Esophagus muscularis mucosa (tissue), 4 donors: ENCODE measurements at regions of chr9 and their contacts with region 1.

Region 1: GRCh38 chr9:91301161-91301560 is 60.6 kb downstream of the AUH start:
- DNase-seq: no peak
- H3K4me3 ChIP-seq: no peak overlapping the region
- H3K27ac ChIP-seq: peak overlapping the region; percentile 55 to 85 (median 83)
- H3K4me1 ChIP-seq: peaks cover 27 to 69% (median 54%) of the 10 kb centered on the region in 4 donors
- H3K27me3 ChIP-seq: no peaks in the 10 kb centered on the region
- CTCF ChIP-seq: no peak
- EP300 ChIP-seq: no peak
- POLR2A ChIP-seq: no peak

Region 2: GRCh38 chr9:91193658-91194391 is 107.3 kb before region 1 on chr9:
- intact Hi-C with region 1: loop called (anchors 5 kb)
- DNase-seq: peak; percentile 95
- H3K4me3 ChIP-seq: peak overlapping the region; percentile 55 to 58 (median 57)
- H3K27ac ChIP-seq: peak overlapping the region; percentile 98 to 100 (median 99)
- H3K4me1 ChIP-seq: peaks cover 53 to 73% (median 72%) of the 10 kb centered on the region in 4 donors
- H3K27me3 ChIP-seq: no peaks in the 10 kb centered on the region
- CTCF ChIP-seq: no peak
- EP300 ChIP-seq: peak; percentile 33
- POLR2A ChIP-seq: peak; percentile 72

Region 3: GRCh38 chr9:91207729-91208418 is 93.3 kb before region 1 on chr9:
- intact Hi-C with region 1: loop called (anchors 5 kb)
- DNase-seq: no peak
- H3K4me3 ChIP-seq: peak overlapping the region in 2 of 4 donors; percentile 14 to 31
- H3K27ac ChIP-seq: peak overlapping the region; percentile 74 to 90 (median 83)
- H3K4me1 ChIP-seq: peaks cover 16 to 37% (median 27%) of the 10 kb centered on the region in 4 donors
- H3K27me3 ChIP-seq: no peaks in the 10 kb centered on the region
- CTCF ChIP-seq: no peak
- EP300 ChIP-seq: peak; percentile 63
- POLR2A ChIP-seq: no peak

Region 4: GRCh38 chr9:91241909-91242308 is 59.3 kb before region 1 on chr9:
- intact Hi-C with region 1: no loop called
- DNase-seq: no peak
- H3K4me3 ChIP-seq: no peak overlapping the region
- H3K27ac ChIP-seq: no peak overlapping the region
- H3K4me1 ChIP-seq: peaks cover 0 to 6% (median 4%) of the 10 kb centered on the region in 4 donors
- H3K27me3 ChIP-seq: no peaks in the 10 kb centered on the region
- CTCF ChIP-seq: no peak
- EP300 ChIP-seq: no peak
- POLR2A ChIP-seq: no peak

Region 5: DNA sequence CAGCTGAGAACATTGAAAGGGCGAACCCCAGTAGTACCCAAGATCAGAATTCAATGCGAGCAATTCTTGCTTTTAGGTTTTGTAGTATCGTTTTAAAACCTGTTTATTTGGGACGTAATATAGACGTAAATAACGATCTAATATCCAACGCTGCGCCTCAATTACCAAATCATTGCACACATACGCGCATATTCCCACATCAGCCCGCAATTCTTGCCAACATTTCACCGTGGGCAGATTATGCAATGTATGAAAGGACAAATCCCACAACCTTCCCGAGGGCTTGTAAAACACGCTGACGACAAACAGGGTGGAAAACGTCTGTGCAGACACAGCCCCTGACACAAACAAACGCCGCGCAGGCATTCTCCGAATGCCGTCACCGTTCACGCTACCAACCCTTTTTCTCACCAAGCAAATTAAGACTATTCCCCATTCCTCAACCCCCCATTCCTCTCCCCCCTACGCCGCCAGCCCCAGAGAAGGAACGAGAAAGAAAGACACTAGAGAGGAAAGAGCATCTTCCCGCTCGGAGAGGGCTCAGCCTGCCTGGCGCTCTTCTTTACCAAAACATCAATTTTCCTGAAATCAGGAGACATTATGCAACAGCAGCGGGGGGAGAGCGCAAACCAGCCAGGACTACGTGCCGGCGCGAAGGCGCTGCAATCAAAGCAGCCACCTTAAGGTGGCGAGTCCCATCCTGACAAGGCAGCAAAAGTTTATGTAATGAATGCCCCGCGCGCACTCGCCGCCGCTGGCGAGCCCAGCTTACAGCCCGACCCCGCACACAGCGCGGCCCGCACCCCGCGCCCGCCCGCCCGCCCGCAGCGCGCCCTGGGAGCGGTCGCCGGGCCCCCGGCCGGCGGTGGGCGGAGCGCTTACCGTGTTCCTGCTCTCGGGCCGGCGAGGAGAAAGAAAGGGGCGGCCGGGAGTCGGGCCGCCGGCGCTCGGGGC is 121.9 kb after region 1 on chr9:
- intact Hi-C with region 1: loop called (anchors 5 kb)
- DNase-seq: peak; percentile 95
- H3K4me3 ChIP-seq: peak overlapping the region; percentile 61 to 90 (median 82)
- H3K27ac ChIP-seq: peak overlapping the region; percentile 91 to 99 (median 94)
- H3K4me1 ChIP-seq: peaks cover 15 to 59% (median 51%) of the 10 kb centered on the region in 4 donors
- H3K27me3 ChIP-seq: no peaks in the 10 kb centered on the region
- CTCF ChIP-seq: peak in 1 of 3 experiments; percentile 47
- EP300 ChIP-seq: peak; percentile 88
- POLR2A ChIP-seq: peak; percentile 42